Activated CD4-positive, alpha-beta memory T cell treated with anti-CD3 and anti-CD28 coated beads for 36 hours (primary cell): ENCODE measurements at regions of chr12 and their contacts with region 1.

Region 1: DNA sequence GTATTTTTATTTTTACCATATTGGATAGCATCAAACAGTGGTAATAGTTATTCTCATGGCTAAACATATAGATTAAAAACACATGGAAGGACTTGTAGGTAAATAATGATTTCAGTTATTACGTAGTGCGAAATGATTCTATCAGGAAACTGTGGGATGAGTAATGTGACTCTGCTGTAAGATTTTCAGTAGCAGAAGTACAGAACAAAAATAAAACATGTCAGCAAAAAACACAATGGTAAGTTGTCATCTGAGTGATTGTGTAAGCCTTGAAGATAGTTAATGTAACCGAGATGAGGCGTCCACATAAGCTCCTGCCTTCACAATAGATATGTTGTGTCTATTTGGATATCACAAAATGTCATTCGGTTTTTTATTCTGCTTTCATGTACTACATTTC is 99.8 kb downstream of the BORCS5 start:
- DNase-seq: no peak
- H3K4me3 Mint-ChIP-seq: peak overlapping the region; percentile 47
- H3K27ac Mint-ChIP-seq: peak overlapping the region; percentile 93
- H3K4me1 Mint-ChIP-seq: peaks cover 63% of the 10 kb centered on the region
- H3K27me3 Mint-ChIP-seq: no peaks in the 10 kb centered on the region

Region 2: GRCh38 chr12:12272869-12273268 is 183.8 kb before region 1 on chr12:
- CTCF ChIA-PET with region 1: no interaction called
- POLR2A ChIA-PET with region 1: no interaction called
- intact Hi-C with region 1: no loop called
- DNase-seq: no peak
- H3K4me3 Mint-ChIP-seq: no peak overlapping the region
- H3K27ac Mint-ChIP-seq: no peak overlapping the region
- H3K4me1 Mint-ChIP-seq: no peaks in the 10 kb centered on the region
- H3K27me3 Mint-ChIP-seq: no peaks in the 10 kb centered on the region

Region 3: DNA sequence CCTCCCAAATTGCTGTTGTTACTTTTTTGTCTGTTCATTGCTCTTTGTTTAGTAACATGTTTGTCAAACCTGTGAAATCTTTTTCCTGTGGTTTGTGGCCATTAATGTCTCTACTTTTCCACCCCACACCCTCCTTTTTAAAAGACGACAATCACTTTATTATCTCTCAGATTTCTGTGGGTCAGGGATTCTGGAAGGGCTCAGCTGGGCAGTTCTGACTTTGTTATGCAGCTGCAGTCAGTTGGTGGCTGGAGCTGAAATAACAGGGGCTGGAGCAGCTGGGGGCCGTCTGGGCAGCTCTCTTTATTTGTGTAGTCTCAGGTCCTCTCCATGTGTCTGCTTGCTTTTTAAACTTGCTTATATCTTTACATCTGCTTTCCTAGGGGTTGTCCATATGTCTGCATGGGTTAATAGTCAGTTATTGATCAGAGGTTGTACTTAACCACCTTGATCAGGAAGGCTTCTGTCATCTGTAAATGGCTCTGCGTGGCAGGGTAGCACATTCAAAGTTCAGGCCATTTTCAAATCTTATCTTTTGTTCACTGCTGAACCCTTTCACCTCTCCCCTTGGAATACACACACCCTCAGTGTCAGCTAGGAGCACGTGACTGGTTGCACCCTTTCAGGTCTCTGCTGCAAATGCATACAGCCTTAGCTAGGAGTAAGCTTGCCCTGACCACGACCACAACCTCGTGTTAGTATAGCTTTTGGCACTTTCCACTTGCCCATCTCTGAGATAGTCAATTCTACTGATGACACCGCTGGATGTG is 71.9 kb before region 1 on chr12:
- CTCF ChIA-PET with region 1: interaction called, 5 read pairs
- POLR2A ChIA-PET with region 1: interaction called, 5 read pairs
- intact Hi-C with region 1: loop called (anchors 1 kb)
- DNase-seq: peak; percentile 80
- H3K4me3 Mint-ChIP-seq: peak overlapping the region; percentile 48
- H3K27ac Mint-ChIP-seq: peak overlapping the region; percentile 93
- H3K4me1 Mint-ChIP-seq: peaks cover 68% of the 10 kb centered on the region
- H3K27me3 Mint-ChIP-seq: no peaks in the 10 kb centered on the region

Region 4: DNA sequence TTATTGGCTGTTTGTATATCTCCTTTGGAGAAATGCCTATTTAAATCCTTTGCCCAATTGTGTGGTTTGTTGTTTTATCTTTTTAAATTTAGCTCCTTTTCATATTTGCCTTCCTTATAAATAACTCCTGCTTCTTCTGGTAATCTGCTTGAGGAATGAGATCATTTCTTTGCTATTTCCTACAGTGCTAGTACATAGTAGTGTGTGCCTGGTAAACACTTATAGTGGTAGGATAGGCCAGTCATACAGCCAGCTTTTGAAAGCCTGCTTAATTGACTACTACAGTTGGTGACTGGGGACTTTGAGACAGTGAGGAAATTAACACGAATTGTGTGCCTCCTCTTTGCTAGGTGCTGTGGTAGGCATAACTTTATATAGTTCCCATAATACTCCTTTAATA is 31.0 kb before region 1 on chr12:
- CTCF ChIA-PET with region 1: interaction called, 3 read pairs
- POLR2A ChIA-PET with region 1: interaction called, 5 read pairs
- intact Hi-C with region 1: loop called (anchors 5 kb)
- DNase-seq: no peak
- H3K4me3 Mint-ChIP-seq: no peak overlapping the region
- H3K27ac Mint-ChIP-seq: peak overlapping the region; percentile 42
- H3K4me1 Mint-ChIP-seq: peaks cover 54% of the 10 kb centered on the region
- H3K27me3 Mint-ChIP-seq: no peaks in the 10 kb centered on the region

Region 5: DNA sequence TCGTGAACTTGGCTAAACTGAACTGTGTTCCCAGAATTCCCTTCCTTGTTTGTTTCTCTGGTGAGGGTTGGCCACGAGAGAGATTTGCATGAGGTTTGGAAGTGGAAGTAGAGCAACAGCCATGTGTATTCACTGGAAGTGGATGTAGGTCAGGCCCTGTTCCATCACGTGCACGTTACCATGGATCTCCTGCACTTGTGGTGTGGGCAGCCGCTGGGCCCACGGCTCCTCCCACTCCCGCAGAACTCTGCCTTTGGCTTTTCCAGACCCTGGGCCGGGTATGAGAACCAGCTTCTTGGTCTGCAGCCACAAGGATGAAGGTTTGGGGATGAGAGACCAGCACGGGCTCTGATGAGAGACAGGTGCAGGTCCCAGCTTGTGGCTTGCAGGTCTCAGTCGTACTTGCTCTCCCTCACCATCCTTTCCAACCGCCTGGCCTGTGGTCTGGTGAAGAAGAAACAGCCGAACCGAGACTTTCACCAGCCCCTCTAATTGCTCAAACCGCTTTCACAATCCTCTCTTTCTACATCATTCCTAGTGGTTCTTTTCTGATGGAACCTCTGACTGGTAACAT is 11.1 kb after region 1 on chr12:
- CTCF ChIA-PET with region 1: interaction called, 11 read pairs
- POLR2A ChIA-PET with region 1: interaction called, 37 read pairs
- intact Hi-C with region 1: no loop called
- DNase-seq: peak; percentile 80
- H3K4me3 Mint-ChIP-seq: peak overlapping the region; percentile 49
- H3K27ac Mint-ChIP-seq: peak overlapping the region; percentile 97
- H3K4me1 Mint-ChIP-seq: peaks cover 84% of the 10 kb centered on the region
- H3K27me3 Mint-ChIP-seq: no peaks in the 10 kb centered on the region

Region 6: DNA sequence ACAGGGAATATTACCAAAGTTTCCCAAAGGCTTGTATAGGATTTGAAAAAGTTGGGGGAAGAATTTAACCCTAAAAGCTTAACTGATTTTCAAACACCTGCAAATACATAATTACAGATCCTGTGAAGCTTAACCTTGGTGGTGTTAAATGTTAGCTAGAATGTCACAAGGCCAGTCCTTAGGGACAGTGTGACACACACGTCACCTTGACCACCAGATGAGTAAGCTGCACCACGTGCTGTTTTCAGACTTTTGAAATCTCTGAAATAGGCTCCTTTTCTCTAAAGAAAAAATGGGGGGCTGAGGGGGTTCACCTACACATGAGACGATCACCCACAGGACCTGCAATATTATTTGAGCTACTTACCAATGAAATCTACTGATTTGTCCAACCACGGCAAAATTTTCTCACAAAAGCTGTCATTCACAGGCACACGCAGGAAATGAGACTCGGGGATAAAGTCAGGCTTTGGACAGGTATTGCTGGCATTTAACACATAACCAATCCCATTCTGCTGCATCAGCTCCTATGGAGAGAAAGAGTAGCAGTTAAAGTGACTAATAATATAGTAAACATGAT is 30.1 kb after region 1 on chr12:
- CTCF ChIA-PET with region 1: no interaction called
- POLR2A ChIA-PET with region 1: interaction called, 22 read pairs
- intact Hi-C with region 1: no loop called
- DNase-seq: peak; percentile 59
- H3K4me3 Mint-ChIP-seq: peak overlapping the region; percentile 6
- H3K27ac Mint-ChIP-seq: peak overlapping the region; percentile 99
- H3K4me1 Mint-ChIP-seq: peaks cover 56% of the 10 kb centered on the region
- H3K27me3 Mint-ChIP-seq: no peaks in the 10 kb centered on the region